WTC11 (cell line): ENCODE measurements at regions of chr7 and their contacts with region 1.

Region 1: GRCh38 chr7:23712368-23713284 is 2.6 kb downstream of the STK31 start:
- DNase-seq: no peak
- ATAC-seq: no peak
- H3K4me3 Mint-ChIP-seq: no peak overlapping the region
- H3K27ac Mint-ChIP-seq: no peak overlapping the region
- H3K4me1 Mint-ChIP-seq: no peaks in the 10 kb centered on the region
- H3K27me3 Mint-ChIP-seq: peaks cover 5% of the 10 kb centered on the region; the same call in 1 of the 2 replicates
- CTCF ChIP-seq: peak; percentile 35

Region 2: DNA sequence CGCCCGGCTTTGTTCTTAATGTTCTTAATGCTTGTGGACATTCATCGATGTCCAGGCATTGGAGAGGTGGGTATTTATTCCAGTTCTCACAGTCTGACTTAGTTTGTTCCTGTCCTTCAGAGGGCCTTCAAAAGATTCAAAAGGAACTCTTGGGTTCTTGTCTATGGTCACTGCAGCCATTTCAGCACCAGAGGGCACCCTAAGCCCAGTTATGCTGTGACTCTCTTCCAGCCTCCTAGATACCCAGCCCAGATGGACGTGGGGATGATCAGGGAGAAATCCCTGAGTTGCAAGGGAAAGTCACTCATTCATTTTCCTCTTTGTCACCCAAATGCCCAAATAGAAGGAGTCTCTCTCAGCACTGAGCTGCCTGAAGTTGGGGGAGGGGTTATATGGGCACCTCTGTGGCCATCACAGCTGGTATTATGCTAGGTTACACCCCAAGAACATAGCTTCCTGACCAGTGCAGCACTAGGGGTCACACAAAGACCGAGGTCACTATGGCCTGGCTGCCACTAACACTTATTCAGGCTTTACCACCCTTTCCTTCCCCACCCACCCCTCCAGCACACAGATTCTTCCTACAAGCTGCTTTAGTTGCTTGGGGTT is 141.9 kb before region 1 on chr7:
- CTCF ChIA-PET with region 1: interaction called, 30 read pairs
- POLR2A ChIA-PET with region 1: no interaction called
- DNase-seq: peak; percentile 84
- ATAC-seq: peak; percentile 99
- H3K4me3 Mint-ChIP-seq: no peak overlapping the region
- H3K27ac Mint-ChIP-seq: peak overlapping the region; percentile 43; the same call in 1 of the 2 replicates
- H3K4me1 Mint-ChIP-seq: peaks cover 3% of the 10 kb centered on the region
- H3K27me3 Mint-ChIP-seq: no peaks in the 10 kb centered on the region
- CTCF ChIP-seq: peak; percentile 63

Region 3: GRCh38 chr7:23783115-23783514 is 70.5 kb after region 1 on chr7:
- CTCF ChIA-PET with region 1: no interaction called
- POLR2A ChIA-PET with region 1: no interaction called
- DNase-seq: no peak
- ATAC-seq: no peak
- H3K4me3 Mint-ChIP-seq: no peak overlapping the region
- H3K27ac Mint-ChIP-seq: no peak overlapping the region
- H3K4me1 Mint-ChIP-seq: peaks cover 7% of the 10 kb centered on the region; the same call in 1 of the 2 replicates
- H3K27me3 Mint-ChIP-seq: no peaks in the 10 kb centered on the region; the same call in 1 of the 2 replicates
- CTCF ChIP-seq: no peak

Region 4: GRCh38 chr7:23811540-23811939 is 98.9 kb after region 1 on chr7:
- CTCF ChIA-PET with region 1: no interaction called
- POLR2A ChIA-PET with region 1: no interaction called
- DNase-seq: no peak
- ATAC-seq: no peak
- H3K4me3 Mint-ChIP-seq: no peak overlapping the region
- H3K27ac Mint-ChIP-seq: no peak overlapping the region
- H3K4me1 Mint-ChIP-seq: no peaks in the 10 kb centered on the region
- H3K27me3 Mint-ChIP-seq: no peaks in the 10 kb centered on the region
- CTCF ChIP-seq: peak; percentile 66